ENCODE measurements at regions of chr6 and their contacts with region 1.

Region 1: DNA sequence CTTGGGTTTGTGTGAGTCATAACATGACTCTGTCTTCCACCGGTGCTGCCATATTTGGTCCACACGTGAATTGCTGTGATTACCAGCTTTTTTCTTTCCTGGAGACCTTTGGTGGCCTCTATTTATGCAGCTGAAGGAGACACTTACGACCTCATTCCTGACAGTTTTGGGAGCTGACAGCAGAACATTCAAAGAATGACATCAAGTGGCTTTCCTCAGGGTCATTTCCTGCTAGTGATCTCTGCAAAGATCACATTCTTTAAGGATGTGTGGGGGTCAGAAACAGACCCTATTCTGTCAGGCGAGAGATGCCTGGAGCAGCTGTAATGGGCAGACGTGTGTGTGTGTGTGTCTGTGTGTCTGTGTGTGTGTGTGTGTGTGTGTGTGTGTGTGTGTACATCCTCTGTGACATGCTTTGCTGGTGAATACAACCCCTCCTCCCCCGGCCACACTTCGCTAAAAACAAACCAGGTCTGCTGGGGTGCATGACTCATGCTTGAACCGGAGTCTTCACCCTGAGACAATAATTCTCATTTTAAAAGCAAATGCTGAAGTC is 115.6 kb downstream of the TMEM170B start:
- H3K4me3 Mint-ChIP-seq: no peak overlapping the region
- H3K27ac Mint-ChIP-seq: no peak overlapping the region
- H3K4me1 Mint-ChIP-seq: no peaks in the 10 kb centered on the region
- H3K27me3 Mint-ChIP-seq: peaks cover 15% of the 10 kb centered on the region

Region 2: DNA sequence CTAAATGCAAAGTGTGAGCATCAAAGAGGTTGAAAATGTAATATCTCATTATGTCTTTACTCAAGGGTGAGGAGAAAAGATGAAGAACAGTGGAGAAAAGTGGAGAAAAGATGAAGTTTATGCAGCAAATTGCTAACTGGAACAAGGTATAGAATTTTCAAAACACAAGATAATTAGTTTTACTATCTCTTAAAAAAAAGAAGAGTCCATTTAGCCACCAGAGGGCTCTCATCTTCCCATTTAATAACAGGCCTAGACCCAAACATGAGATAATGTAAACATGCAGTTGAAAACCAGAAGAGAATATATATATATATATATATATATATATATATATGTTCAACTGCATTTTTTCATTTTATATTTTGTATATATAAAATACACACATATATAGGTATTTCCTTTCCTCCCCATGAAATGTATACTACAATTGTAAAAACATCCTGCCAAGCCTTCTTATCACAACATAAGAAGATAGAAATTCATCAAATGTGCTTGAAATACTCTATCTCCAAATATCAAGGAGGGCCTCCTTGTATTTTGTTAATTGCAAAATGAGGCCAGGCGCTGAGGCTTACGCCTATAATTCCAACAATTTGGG is 47.1 kb after region 1 on chr6:
- intact Hi-C with region 1: no loop called
- H3K4me3 Mint-ChIP-seq: no peak overlapping the region
- H3K27ac Mint-ChIP-seq: no peak overlapping the region
- H3K4me1 Mint-ChIP-seq: peaks cover 18% of the 10 kb centered on the region
- H3K27me3 Mint-ChIP-seq: no peaks in the 10 kb centered on the region

Region 3: DNA sequence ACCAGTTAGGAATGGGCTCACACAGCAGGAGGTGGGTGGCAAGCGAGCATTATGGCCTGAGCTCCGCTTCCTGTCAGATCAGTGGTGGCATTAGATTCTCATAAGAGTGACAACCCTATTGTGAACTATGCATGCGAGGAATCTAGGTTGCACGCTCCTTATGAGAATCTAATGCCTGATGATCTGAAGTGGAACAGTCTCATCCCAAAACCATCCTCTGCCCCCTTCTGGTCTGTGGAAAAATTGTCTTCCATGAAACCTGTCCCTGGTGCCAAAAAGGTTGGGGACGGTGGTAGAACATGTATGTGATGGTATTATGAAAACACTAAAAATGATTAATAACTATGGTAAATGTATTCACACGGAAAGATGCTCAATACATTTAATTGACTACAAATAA is 259.3 kb after region 1 on chr6:
- intact Hi-C with region 1: loop called (anchors 5 kb)
- H3K4me3 Mint-ChIP-seq: no peak overlapping the region
- H3K27ac Mint-ChIP-seq: no peak overlapping the region
- H3K4me1 Mint-ChIP-seq: no peaks in the 10 kb centered on the region
- H3K27me3 Mint-ChIP-seq: no peaks in the 10 kb centered on the region

Region 4: GRCh38 chr6:12150812-12151432 is 497.8 kb after region 1 on chr6:
- intact Hi-C with region 1: loop called (anchors 10 kb)
- H3K4me3 Mint-ChIP-seq: no peak overlapping the region
- H3K27ac Mint-ChIP-seq: no peak overlapping the region
- H3K4me1 Mint-ChIP-seq: no peaks in the 10 kb centered on the region
- H3K27me3 Mint-ChIP-seq: no peaks in the 10 kb centered on the region

Region 5: DNA sequence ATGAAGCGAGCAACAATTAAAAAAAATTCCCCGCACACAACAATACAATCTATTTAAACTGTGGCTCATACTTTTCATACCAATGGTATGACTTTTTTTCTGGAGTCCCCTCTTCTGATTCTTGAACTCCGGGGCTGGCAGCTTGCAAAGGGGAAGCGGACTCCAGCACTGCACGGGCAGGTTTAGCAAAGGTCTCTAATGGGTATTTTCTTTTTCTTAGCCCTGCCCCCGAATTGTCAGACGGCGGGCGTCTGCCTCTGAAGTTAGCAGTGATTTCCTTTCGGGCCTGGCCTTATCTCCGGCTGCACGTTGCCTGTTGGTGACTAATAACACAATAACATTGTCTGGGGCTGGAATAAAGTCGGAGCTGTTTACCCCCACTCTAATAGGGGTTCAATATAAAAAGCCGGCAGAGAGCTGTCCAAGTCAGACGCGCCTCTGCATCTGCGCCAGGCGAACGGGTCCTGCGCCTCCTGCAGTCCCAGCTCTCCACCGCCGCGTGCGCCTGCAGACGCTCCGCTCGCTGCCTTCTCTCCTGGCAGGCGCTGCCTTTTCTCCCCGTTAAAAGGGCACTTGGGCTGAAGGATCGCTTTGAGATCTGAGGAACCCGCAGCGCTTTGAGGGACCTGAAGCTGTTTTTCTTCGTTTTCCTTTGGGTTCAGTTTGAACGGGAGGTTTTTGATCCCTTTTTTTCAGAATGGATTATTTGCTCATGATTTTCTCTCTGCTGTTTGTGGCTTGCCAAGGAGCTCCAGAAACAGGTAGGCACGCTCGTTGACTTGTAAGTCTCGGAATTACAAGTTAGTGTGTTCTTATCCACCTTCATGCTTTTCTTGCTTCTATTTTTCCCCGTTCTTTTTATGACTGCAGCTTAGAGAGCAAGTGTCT is 637.1 kb after region 1 on chr6 and contains the start of gene EDN1:
- intact Hi-C with region 1: loop called (anchors 5 kb)
- H3K4me3 Mint-ChIP-seq: peak within 1 kb of the TSS; percentile 83
- H3K27ac Mint-ChIP-seq: peak within 1 kb of the TSS; percentile 17
- H3K4me1 Mint-ChIP-seq: peaks cover 45% of the 10 kb centered on the region
- H3K27me3 Mint-ChIP-seq: peaks cover 44% of the 10 kb centered on the region

Region 6: GRCh38 chr6:12890171-12890790 is 1237.2 kb after region 1 on chr6:
- intact Hi-C with region 1: loop called (anchors 10 kb)
- H3K4me3 Mint-ChIP-seq: no peak overlapping the region
- H3K27ac Mint-ChIP-seq: no peak overlapping the region
- H3K4me1 Mint-ChIP-seq: no peaks in the 10 kb centered on the region
- H3K27me3 Mint-ChIP-seq: peaks cover 8% of the 10 kb centered on the region